IMR-90 (cell line): ENCODE measurements at regions of chr7 and their contacts with region 1.

Region 1: DNA sequence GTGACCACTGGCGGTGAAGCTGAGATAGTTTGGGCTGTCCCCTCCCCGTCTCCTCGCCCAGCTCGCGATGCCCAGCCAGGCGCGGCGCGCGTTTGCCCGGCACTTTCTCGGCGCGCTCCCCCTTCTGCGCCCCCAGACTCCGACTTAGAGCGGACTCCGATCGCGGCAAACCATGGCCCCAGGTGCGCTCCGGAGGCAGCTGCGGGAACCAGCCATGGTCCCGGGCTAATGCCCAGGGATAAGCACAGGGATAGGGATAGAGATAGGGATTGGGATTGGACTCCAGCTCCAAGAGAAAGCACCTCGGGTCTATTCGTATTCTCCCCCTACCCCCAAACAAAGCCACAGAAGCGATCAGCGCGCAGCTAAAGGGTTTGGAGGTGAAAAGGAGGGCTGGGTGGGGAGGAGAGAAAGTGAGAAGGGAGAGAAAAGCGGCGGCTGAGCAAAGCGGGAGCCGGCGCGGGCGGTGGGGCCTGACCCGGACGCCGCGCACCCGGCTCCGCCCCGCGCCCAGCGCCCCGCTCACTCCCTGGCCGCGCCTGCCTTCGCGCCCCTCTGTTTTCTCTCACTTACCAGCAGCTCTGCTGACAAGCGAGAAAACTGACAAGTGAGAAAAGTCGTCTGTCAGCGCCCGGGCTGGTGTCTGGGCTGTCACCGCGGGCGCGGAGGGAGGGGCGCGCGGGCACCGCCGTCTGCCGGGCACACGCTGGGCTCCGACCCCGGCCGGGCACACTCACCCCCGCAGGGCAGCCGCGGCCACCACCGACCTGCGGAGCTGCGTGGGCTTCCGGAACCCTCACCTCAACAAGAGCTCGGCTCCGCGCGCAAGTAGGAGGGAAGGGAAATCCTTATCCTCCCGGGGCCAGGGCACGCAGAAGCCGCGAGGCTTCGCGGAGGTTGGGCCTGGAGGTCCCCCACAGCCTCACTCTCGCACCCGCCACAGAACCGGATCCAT is at the start of gene PDE1C:
- DNase-seq: peak; percentile 19
- ATAC-seq: peak; percentile 76
- H3K4me3 ChIP-seq: peak within 1 kb of the TSS; percentile 91
- H3K27ac ChIP-seq: peak within 1 kb of the TSS; percentile 49
- H3K4me1 ChIP-seq: peaks cover 5% of the 10 kb centered on the region; the same call in 1 of the 2 replicates
- H3K27me3 ChIP-seq: no peaks in the 10 kb centered on the region
- CTCF ChIP-seq: no peak
- POLR2A ChIP-seq: no peak
- RAD21 ChIP-seq: no peak
- total RNA-seq, gene PDE1C: 53.3 and 61.5 TPM in 2 replicates

Region 2: DNA sequence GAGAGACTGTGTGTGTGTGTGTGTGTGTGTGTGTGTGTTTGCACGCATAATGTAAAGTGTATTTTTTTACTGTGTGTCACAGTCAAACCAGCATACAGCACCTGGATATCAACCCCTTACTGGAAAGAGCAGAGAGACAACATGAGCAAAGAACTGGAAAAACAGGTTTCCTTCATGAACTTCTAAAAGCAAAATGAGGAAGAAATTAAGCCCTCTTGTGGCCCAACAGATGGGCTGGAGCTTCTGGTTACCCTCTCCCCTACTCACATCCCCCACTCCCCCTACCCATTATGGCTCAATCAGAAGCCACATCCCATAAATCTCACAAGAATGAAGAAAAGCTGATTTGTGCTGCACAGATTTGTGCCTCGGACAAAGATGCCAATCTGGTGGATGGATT is 36.6 kb before region 1 on chr7:
- CTCF ChIA-PET with region 1: no interaction called
- POLR2A ChIA-PET with region 1: no interaction called
- dilution Hi-C with region 1: no loop called
- in situ Hi-C with region 1: no loop called
- intact Hi-C with region 1: loop called (anchors 5 kb)
- DNase-seq: no peak
- ATAC-seq: no peak
- H3K4me3 ChIP-seq: no peak overlapping the region
- H3K27ac ChIP-seq: no peak overlapping the region
- H3K4me1 ChIP-seq: peaks cover 8% of the 10 kb centered on the region
- H3K27me3 ChIP-seq: no peaks in the 10 kb centered on the region
- CTCF ChIP-seq: no peak
- POLR2A ChIP-seq: no peak
- RAD21 ChIP-seq: no peak